T-cell (primary cell): ENCODE measurements at regions of chr11 and their contacts with region 1.

Region 1: DNA sequence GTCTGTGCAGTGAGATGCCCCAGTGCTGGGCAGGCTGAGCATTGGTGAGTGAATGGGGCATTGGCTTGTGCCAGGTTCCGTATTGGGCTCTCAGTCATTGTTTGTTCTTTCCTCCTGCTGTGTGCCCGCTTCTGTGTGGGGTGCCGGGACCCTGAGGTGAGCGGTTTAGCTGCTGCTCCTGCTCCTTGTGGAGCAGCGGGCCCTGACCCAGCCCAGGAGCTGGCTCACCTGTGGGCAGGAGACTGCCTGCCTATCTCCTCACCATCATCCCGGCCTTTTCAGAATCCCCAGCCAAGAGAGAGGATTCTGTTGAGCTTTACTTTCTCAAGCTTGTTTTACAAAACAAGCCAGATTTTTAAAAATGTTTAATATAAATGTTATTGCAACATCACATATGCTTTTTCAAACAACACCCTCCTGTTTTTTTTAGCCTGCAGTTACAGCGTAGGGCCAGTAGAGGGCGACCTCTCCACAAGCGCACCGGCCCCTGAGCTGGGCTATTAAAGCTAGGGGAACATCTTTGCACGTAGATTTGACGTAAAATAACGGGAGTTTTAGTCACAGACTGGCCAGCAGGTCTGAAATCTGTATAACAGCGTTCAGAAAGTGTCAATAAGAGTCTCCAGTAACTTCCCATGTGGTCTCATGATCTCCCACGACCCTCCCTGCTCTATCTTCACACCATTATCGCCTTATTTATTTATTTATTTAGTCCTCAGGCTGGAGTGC is 25.1 kb upstream of the RELT start:
- DNase-seq: peak; percentile 28 to 84 (median 55)
- ATAC-seq: peak; percentile 73 to 91 (median 77)
- H3K4me3 ChIP-seq: no peak overlapping the region
- H3K4me3 Mint-ChIP-seq: no peak overlapping the region
- H3K27ac ChIP-seq: no peak overlapping the region
- H3K27ac Mint-ChIP-seq: peak overlapping the region in 1 of 2 donors; percentile 18
- H3K4me1 ChIP-seq: peaks cover 0 to 4% of the 10 kb centered on the region in 2 experiments
- H3K4me1 Mint-ChIP-seq: peaks cover 3 to 6% (median 4%) of the 10 kb centered on the region in 3 donors
- H3K27me3 ChIP-seq: peaks cover 0 to 30% of the 10 kb centered on the region in 2 experiments
- H3K27me3 Mint-ChIP-seq: peaks cover 2 to 4% of the 10 kb centered on the region in 2 donors

Region 2: GRCh38 chr11:73295231-73295995 is 55.7 kb before region 1 on chr11:
- CTCF ChIA-PET with region 1: no interaction called
- POLR2A ChIA-PET with region 1: no interaction called
- DNase-seq: peak; percentile 16 to 80 (median 65)
- ATAC-seq: peak; percentile 68 to 76 (median 76)
- H3K4me3 ChIP-seq: no peak overlapping the region
- H3K4me3 Mint-ChIP-seq: no peak overlapping the region
- H3K27ac ChIP-seq: no peak overlapping the region
- H3K27ac Mint-ChIP-seq: peak overlapping the region in 1 of 2 donors; percentile 68
- H3K4me1 ChIP-seq: no peaks in the 10 kb centered on the region
- H3K4me1 Mint-ChIP-seq: peaks cover 0 to 3% (median 0%) of the 10 kb centered on the region in 3 donors
- H3K27me3 ChIP-seq: peaks cover 0 to 35% of the 10 kb centered on the region in 2 experiments
- H3K27me3 Mint-ChIP-seq: peaks cover 18 to 22% of the 10 kb centered on the region in 2 donors

Region 3: DNA sequence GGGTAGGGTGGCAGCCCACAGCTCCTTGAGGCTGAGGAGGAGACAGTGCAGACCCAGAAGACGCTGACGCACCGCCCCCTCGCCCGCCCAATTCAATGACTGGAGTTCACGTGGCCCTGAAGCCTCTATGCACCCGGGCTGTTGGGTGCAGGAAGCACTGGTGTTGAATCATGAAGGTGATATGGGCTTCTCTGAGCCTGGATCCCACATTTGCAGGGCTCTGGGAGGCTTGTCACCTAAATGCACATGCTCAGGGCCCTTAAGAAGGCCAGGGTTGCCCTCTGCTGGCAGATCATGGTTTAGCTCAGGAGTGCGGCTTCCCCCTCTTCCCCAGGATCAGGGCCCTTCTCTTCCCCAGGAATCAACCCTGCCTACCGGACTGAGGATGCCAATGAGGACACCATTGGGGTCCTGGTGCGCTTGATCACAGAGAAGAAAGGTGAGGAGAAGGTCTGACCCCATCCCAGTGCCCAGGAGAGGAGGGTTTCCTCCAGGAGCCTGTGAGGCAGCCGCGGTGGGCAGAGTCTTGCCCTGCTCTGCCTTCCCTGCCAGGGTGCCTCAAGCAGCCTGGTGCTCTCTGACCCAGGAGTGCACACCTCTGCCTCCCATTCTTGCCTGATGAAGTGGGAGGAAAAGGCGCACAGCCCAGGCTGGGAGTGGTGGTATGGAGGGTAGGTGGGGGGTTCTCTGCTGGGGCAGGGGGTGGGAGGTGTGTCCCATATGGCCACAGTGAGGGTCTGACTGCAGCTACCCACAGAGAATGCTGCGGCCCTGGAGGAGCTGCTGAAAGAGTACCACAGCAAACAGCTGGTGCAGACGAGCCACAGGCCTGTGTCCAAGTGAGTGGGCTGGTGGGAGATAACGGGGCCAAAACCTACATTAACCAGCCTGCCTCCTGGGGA is 42.7 kb after region 1 on chr11:
- CTCF ChIA-PET with region 1: interaction called, 10 to 77 read pairs
- POLR2A ChIA-PET with region 1: no interaction called
- DNase-seq: peak; percentile 33 to 80 (median 62)
- ATAC-seq: peak; percentile 54 to 82 (median 71)
- H3K4me3 ChIP-seq: no peak overlapping the region
- H3K4me3 Mint-ChIP-seq: no peak overlapping the region
- H3K27ac ChIP-seq: no peak overlapping the region
- H3K27ac Mint-ChIP-seq: no peak overlapping the region
- H3K4me1 ChIP-seq: no peaks in the 10 kb centered on the region
- H3K4me1 Mint-ChIP-seq: peaks cover 4 to 12% (median 5%) of the 10 kb centered on the region in 3 donors
- H3K27me3 ChIP-seq: no peaks in the 10 kb centered on the region
- H3K27me3 Mint-ChIP-seq: no peaks in the 10 kb centered on the region

Region 4: GRCh38 chr11:73402834-73403185 is 51.7 kb after region 1 on chr11:
- CTCF ChIA-PET with region 1: interaction called, 6 to 22 read pairs
- POLR2A ChIA-PET with region 1: interaction called in 1 of 2 experiments, 4 read pairs
- DNase-seq: peak in 1 of 35 experiments; percentile 37
- ATAC-seq: peak in 3 of 4 experiments; percentile 13 to 48 (median 30)
- H3K4me3 ChIP-seq: no peak overlapping the region
- H3K4me3 Mint-ChIP-seq: no peak overlapping the region
- H3K27ac ChIP-seq: no peak overlapping the region
- H3K27ac Mint-ChIP-seq: peak overlapping the region in 1 of 2 donors; percentile 22
- H3K4me1 ChIP-seq: no peaks in the 10 kb centered on the region
- H3K4me1 Mint-ChIP-seq: peaks cover 0 to 6% (median 0%) of the 10 kb centered on the region in 3 donors
- H3K27me3 ChIP-seq: no peaks in the 10 kb centered on the region
- H3K27me3 Mint-ChIP-seq: no peaks in the 10 kb centered on the region

Region 5: GRCh38 chr11:73420136-73420535 is 69.1 kb after region 1 on chr11:
- CTCF ChIA-PET with region 1: interaction called in 1 of 2 experiments, 10 read pairs
- POLR2A ChIA-PET with region 1: no interaction called
- DNase-seq: no peak
- ATAC-seq: no peak
- H3K4me3 ChIP-seq: no peak overlapping the region
- H3K4me3 Mint-ChIP-seq: no peak overlapping the region
- H3K27ac ChIP-seq: no peak overlapping the region
- H3K27ac Mint-ChIP-seq: no peak overlapping the region
- H3K4me1 ChIP-seq: peaks cover 0 to 3% of the 10 kb centered on the region in 2 experiments
- H3K4me1 Mint-ChIP-seq: peaks cover 2 to 7% (median 4%) of the 10 kb centered on the region in 3 donors
- H3K27me3 ChIP-seq: no peaks in the 10 kb centered on the region
- H3K27me3 Mint-ChIP-seq: no peaks in the 10 kb centered on the region

Region 6: DNA sequence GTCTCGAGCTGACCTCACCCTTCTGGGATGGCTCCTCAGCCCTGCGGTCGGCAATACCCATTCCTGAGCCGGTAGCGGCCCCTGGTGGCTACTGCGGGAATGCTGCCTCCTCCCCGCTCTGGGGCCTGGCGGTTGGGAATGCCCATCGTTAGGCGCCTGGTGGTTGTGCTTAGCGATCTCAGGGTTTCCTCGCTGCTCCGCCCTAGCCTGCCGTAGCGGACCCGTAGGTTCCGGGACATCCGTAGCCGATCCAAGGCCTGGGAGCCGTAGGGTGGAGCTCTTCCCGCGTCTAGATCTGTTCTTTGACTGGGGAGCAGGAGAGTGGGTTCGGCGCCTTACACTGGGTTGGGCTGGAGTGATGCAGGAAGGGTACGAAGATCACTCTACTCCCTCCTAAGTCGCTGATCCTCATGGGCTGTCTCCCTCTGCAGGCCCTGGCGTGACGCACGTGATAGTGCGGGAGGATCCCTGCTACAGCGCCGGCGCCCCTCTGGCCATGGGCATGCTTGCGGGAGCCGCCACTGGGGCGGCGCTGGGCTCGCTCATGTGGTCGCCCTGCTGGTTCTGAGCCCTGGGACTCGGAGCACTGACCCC is 310.1 kb after region 1 on chr11:
- CTCF ChIA-PET with region 1: interaction called, 3 to 16 read pairs
- POLR2A ChIA-PET with region 1: no interaction called
- DNase-seq: peak; percentile 45 to 90 (median 74)
- ATAC-seq: peak; percentile 85 to 98 (median 90)
- H3K4me3 ChIP-seq: peak overlapping the region in 1 of 2 donors; percentile 9
- H3K4me3 Mint-ChIP-seq: peak overlapping the region in 2 of 3 donors; percentile 22 to 52
- H3K27ac ChIP-seq: no peak overlapping the region
- H3K27ac Mint-ChIP-seq: no peak overlapping the region
- H3K4me1 ChIP-seq: peaks cover 0 to 17% of the 10 kb centered on the region in 2 experiments
- H3K4me1 Mint-ChIP-seq: peaks cover 12 to 20% (median 18%) of the 10 kb centered on the region in 3 donors
- H3K27me3 ChIP-seq: peaks cover 0 to 7% of the 10 kb centered on the region in 2 experiments
- H3K27me3 Mint-ChIP-seq: no peaks in the 10 kb centered on the region